Activated T-helper 2 cell treated with anti-CD3 and anti-CD28 coated beads, Interferon-gamma antibody, Interleukin-2, Interleukin-4, amounts not matched to agents 10 μg/mL and 5 μg/mL and 100 μg/mL, durations not matched to agents 14 hours and 24 hours and 36 hours (primary cell): ENCODE measurements at regions of chr13 and their contacts with region 1.

Region 1: GRCh38 chr13:28540612-28541011 is 45.7 kb upstream of the FLT1 start:
- DNase-seq: no peak
- H3K4me3 Mint-ChIP-seq: no peak overlapping the region
- H3K27ac Mint-ChIP-seq: peak overlapping the region; percentile 85
- H3K4me1 Mint-ChIP-seq: peaks cover 29% of the 10 kb centered on the region
- H3K27me3 Mint-ChIP-seq: no peaks in the 10 kb centered on the region

Region 2: DNA sequence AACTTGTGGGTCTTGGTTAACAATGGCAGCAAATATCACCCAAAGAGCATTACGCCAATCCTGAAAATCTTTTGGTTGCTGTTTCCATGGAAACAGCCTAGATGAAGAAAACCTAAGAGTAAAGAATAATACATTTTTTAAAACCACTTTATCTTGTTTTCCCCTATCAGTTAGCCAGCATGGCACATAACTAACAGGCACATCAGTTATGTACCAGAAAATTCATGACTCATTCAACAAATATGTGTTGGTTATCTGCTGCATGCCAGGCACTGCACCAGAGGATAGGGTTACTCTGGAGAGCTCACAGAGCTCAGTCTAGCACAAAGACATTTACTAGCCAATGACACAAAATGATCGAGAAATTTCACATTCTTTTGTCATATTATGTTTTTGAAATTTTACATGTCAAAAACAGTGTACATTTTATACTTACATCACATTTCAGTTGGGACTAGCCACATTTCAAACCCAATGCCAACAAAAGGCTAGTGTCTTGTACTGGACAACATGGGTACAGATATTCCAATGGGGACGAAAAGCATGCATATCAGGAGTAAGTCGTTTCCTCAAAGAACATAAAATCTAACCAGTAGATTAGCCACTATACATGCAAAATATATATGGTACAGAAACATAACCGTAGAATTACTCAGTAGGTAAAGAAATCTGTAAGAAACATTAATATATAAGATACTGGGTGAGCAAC is 940.6 kb before region 1 on chr13:
- intact Hi-C with region 1: no loop called
- DNase-seq: no peak
- H3K4me3 Mint-ChIP-seq: no peak overlapping the region
- H3K27ac Mint-ChIP-seq: no peak overlapping the region
- H3K4me1 Mint-ChIP-seq: peaks cover 10% of the 10 kb centered on the region
- H3K27me3 Mint-ChIP-seq: no peaks in the 10 kb centered on the region

Region 3: GRCh38 chr13:28268800-28269223 is 271.8 kb before region 1 on chr13:
- intact Hi-C with region 1: loop called (anchors 2 kb)
- DNase-seq: no peak
- H3K4me3 Mint-ChIP-seq: no peak overlapping the region
- H3K27ac Mint-ChIP-seq: no peak overlapping the region
- H3K4me1 Mint-ChIP-seq: peaks cover 23% of the 10 kb centered on the region
- H3K27me3 Mint-ChIP-seq: no peaks in the 10 kb centered on the region

Region 4: DNA sequence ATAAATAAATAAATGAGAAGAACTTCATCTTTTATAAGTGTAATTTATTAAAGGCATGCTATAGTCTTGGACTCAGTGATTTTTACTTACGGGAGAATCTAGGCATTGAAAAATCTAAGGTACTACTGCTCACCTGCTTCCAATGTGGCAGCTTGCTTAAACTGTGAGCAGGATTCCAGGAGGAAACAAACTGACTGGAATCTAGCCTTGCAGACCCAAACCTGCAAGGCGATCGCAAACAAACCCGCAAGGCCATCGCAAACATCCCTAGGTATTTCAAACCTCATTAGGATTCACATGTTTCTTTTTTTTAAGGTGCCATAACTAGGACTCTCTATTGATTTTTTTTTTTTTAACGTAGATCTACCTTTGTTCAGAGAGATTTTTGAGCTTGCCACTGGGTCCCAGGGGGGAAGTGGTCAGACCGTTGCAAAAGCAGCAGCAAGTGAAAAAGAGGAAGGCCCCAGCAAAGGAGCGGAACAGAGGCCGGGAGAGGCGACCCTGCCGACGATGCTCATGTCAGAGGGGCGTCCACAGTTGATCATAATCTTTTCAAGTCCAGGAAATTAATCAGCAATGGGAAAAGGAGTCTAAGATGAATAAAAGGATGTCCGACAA is 13.1 kb before region 1 on chr13:
- intact Hi-C with region 1: loop called (anchors 1 kb)
- DNase-seq: no peak
- H3K4me3 Mint-ChIP-seq: no peak overlapping the region
- H3K27ac Mint-ChIP-seq: no peak overlapping the region
- H3K4me1 Mint-ChIP-seq: peaks cover 9% of the 10 kb centered on the region
- H3K27me3 Mint-ChIP-seq: peaks cover 13% of the 10 kb centered on the region

Region 5: GRCh38 chr13:28574617-28575142 is 34.1 kb after region 1 on chr13:
- intact Hi-C with region 1: loop called (anchors 5 kb)
- DNase-seq: no peak
- H3K4me3 Mint-ChIP-seq: no peak overlapping the region
- H3K27ac Mint-ChIP-seq: peak overlapping the region; percentile 82
- H3K4me1 Mint-ChIP-seq: peaks cover 16% of the 10 kb centered on the region
- H3K27me3 Mint-ChIP-seq: peaks cover 6% of the 10 kb centered on the region

Region 6: DNA sequence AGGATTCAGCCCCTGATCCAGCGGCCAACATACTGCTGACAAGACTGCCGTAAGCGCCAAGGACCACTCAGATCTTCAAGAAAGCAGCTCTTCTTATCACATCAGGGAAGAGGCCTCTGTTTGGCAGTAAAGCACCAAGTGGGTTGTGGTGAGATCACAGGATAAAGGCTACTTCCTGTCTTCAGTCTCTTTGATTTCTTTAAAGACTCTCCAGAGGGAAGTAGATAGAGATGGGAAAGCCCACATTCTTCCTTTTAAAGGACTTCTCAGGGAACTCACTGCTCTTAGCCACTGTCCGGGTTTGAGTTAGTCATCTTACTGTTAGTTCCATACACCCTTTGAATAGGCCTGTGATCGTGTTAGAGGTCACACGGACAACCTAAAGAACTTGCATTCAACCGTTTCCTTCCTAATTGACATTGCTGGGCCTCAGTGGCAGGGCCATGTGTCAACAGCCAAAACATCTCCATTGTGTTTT is 71.1 kb after region 1 on chr13:
- intact Hi-C with region 1: loop called (anchors 2 kb)
- DNase-seq: peak; percentile 25
- H3K4me3 Mint-ChIP-seq: peak overlapping the region; percentile 56
- H3K27ac Mint-ChIP-seq: peak overlapping the region; percentile 92
- H3K4me1 Mint-ChIP-seq: peaks cover 43% of the 10 kb centered on the region
- H3K27me3 Mint-ChIP-seq: peaks cover 4% of the 10 kb centered on the region